ENCODE measurements at regions of chr1 and their contacts with region 1.

Region 1: GRCh38 chr1:225777583-225778336 is at the start of gene SRP9:
- DNase-seq: peak; percentile 95 to 100
- H3K4me3 ChIP-seq: peak within 1 kb of the TSS; percentile 80
- H3K27ac ChIP-seq: peak within 1 kb of the TSS; percentile 84
- H3K4me1 ChIP-seq: peaks cover 32% of the 10 kb centered on the region
- H3K27me3 ChIP-seq: no peaks in the 10 kb centered on the region
- CTCF ChIP-seq: peak; percentile 86
- total RNA-seq, gene SRP9: 291 and 406 TPM in 2 replicates

Region 2: DNA sequence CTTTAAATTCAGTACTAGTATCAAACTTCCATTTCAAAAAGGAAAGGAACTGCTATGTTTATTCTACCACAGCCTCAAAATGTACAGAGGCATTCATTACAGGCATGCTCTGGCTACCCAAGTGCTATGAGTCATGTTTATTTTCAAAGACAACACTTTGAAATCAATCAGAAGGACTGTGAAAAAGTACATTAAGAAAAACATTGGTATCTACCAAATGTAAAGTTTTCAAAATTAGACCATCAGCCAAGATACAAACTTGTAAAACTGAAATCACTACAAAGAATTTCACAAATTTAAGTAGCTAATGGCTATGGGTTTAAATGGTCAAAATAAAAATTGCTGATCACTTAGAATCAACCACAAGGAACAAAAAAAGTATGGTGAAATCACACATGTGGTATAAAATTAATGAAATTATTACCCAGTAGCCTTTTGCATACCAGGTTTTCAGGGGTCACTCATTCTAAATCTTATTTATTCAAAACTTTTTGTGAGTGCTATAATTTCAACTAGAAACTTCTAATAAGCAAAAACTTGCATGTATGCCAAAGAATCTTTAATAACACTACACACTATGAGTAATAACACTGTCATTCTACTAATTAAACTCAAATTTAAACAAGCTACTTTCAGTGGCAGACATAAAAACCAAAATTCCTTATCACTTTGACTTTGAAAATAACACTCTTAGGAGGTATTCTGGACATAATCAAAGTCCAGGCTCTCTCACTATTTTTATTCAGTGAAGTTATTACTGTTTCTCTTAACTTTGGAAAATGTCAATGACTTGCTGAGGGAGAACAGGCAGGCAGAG is 174.0 kb before region 1 on chr1:
- CTCF ChIA-PET with region 1: no interaction called
- POLR2A ChIA-PET with region 1: no interaction called
- intact Hi-C with region 1: no loop called
- DNase-seq: peak; percentile 8 to 72
- H3K4me3 ChIP-seq: no peak overlapping the region
- H3K27ac ChIP-seq: peak overlapping the region; percentile 69
- H3K4me1 ChIP-seq: peaks cover 42% of the 10 kb centered on the region
- H3K27me3 ChIP-seq: no peaks in the 10 kb centered on the region
- CTCF ChIP-seq: no peak

Region 3: GRCh38 chr1:225754940-225755641 is 22.7 kb before region 1 on chr1:
- CTCF ChIA-PET with region 1: interaction called, 20 read pairs
- POLR2A ChIA-PET with region 1: no interaction called
- intact Hi-C with region 1: no loop called
- DNase-seq: peak; percentile 63 to 83
- H3K4me3 ChIP-seq: no peak overlapping the region
- H3K27ac ChIP-seq: peak overlapping the region; percentile 48
- H3K4me1 ChIP-seq: peaks cover 30% of the 10 kb centered on the region
- H3K27me3 ChIP-seq: no peaks in the 10 kb centered on the region
- CTCF ChIP-seq: no peak

Region 4: DNA sequence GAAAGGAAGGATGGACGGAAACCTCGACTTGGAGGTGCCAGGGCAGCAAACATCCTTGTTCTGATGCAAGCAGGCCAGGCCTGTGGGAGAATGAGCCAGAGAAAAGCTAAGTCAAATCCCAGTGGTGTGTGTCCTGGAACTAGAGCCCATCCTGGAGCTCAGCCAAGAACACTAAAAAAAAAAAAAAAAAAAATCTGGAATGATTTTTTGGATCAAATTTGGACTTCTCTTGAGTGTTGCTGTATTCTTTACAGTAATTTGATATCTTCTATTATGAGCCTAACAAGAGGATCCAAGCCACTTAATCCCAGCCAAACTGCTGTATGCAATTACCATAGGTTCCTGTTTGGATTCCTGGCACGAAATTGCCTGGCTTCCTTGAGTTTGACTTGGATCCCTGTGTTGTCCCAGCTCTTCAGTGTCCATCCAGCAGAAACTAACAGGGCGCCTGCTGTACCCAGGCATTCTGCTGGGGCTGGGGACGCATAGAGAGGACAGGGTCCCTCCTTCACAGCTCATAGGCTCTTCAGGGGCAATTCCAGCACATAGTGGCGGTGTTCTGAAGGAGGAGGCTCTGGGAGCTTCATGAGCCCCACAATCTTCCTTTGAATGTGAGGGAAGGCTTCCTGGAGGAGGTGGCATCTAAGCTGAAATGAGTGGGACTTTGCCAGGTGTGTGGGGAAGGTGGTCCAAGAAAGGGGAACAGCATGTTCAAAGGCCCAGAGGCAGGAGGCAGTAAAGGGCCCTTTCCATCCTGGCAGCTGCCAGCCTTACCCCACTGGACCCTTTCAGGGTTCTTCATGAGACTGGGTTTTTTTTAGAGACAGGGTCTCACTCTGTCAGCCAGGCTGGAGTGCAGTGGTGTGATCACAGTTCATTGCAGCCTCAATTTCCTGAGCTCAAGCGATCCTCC is 56.9 kb after region 1 on chr1:
- CTCF ChIA-PET with region 1: interaction called, 10 read pairs
- POLR2A ChIA-PET with region 1: no interaction called
- intact Hi-C with region 1: no loop called
- DNase-seq: no peak
- H3K4me3 ChIP-seq: no peak overlapping the region
- H3K27ac ChIP-seq: no peak overlapping the region
- H3K4me1 ChIP-seq: no peaks in the 10 kb centered on the region
- H3K27me3 ChIP-seq: no peaks in the 10 kb centered on the region
- CTCF ChIP-seq: no peak

Region 5: DNA sequence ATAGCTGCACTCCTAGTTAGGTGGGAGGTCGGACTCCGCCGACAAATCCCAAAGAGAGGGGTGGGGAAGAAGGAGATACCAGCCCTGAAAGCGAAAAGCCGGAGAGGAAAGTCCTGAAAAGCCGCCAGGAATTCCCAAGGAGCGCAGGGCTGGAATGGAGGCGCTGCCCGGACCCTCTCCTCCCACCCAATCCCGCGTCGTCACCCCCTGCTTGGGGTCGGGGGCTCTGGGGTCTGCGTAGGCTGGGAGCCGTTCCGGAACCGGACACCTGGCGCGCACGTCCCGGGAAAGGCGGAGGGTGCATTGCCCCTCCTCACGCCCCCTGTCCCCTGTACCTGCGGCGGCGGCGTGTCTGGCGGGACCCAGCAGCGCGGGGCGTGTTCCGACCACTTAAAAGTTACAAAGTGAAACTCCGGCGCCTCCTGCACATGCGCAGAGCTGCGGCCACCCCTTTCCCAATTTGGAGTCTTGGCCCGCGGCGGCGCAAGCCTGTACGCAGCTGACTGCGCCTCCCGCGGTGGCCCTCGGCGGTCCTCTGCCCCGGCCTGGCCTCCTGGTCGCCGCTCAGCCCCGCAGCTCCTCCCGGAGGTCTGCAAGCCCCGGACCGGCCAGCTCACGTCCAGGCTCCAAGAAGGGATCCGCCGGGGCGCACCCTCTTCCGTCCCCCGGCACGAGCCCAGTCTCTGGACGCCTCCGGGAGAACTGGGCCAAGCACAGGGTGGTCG is 104.4 kb after region 1 on chr1 and contains the start of gene TMEM63A:
- CTCF ChIA-PET with region 1: no interaction called
- POLR2A ChIA-PET with region 1: no interaction called
- intact Hi-C with region 1: loop called (anchors 1 kb)
- DNase-seq: peak; percentile 75 to 95
- H3K4me3 ChIP-seq: peak within 1 kb of the TSS; percentile 92
- H3K27ac ChIP-seq: peak within 1 kb of the TSS; percentile 75
- H3K4me1 ChIP-seq: peaks cover 57% of the 10 kb centered on the region
- H3K27me3 ChIP-seq: no peaks in the 10 kb centered on the region
- CTCF ChIP-seq: no peak; the same call in 1 of the 2 replicates
- total RNA-seq, gene TMEM63A: 115 and 126 TPM in 2 replicates

Region 6: GRCh38 chr1:225977937-225978748 is 200.4 kb after region 1 on chr1:
- CTCF ChIA-PET with region 1: no interaction called
- POLR2A ChIA-PET with region 1: no interaction called
- intact Hi-C with region 1: loop called (anchors 1 kb)
- DNase-seq: no peak
- H3K4me3 ChIP-seq: no peak overlapping the region
- H3K27ac ChIP-seq: no peak overlapping the region
- H3K4me1 ChIP-seq: no peaks in the 10 kb centered on the region
- H3K27me3 ChIP-seq: no peaks in the 10 kb centered on the region
- CTCF ChIP-seq: no peak

Measured in PC-9 (cell line).